ENCODE measurements at regions of chr3 and their contacts with region 1.

Region 1: DNA sequence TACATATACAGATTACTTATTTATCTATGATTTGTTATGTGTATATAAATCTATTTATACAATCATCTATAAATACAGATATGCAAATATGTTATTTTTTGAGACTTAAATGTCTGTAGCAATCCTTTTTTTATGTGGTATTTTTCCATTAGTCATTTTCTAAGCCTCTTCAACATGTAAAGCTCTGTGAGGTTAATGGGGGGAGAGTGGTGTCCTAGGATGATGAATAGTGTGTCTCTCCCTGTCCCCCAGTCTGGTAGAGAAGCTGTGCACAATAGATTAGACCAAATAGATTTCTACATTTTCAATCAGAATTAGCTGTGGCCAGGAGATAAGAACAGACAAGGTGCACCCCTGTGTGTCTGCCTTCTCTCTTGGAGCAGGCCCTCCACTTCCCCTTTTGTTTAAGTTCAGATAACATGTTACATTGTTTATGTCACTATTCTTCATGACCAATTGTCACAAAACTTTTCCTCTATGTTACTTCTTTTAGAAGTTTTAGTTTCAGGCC is 453.9 kb downstream of the LPP start:
- DNase-seq: no peak
- H3K4me3 ChIP-seq: no peak overlapping the region
- H3K27me3 ChIP-seq: no peaks in the 10 kb centered on the region
- CTCF ChIP-seq: no peak

Region 2: GRCh38 chr3:188385311-188385734 is 222.5 kb before region 1 on chr3:
- CTCF ChIA-PET with region 1: no interaction called
- POLR2A ChIA-PET with region 1: interaction called, 11 read pairs
- DNase-seq: peak; percentile 16
- H3K4me3 ChIP-seq: no peak overlapping the region
- H3K27me3 ChIP-seq: no peaks in the 10 kb centered on the region
- CTCF ChIP-seq: no peak

Region 3: GRCh38 chr3:188396900-188397299 is 211.0 kb before region 1 on chr3:
- CTCF ChIA-PET with region 1: no interaction called
- POLR2A ChIA-PET with region 1: no interaction called
- DNase-seq: no peak
- H3K4me3 ChIP-seq: no peak overlapping the region
- H3K27me3 ChIP-seq: no peaks in the 10 kb centered on the region
- CTCF ChIP-seq: no peak